K562 (cell line): ENCODE measurements at regions of chr5 and their contacts with region 1.

Region 1: GRCh38 chr5:146173597-146173996 is 8.9 kb downstream of the LARS1 start:
- DNase-seq: no peak
- ATAC-seq: no peak
- H3K4me3 ChIP-seq: no peak overlapping the region
- H3K27ac ChIP-seq: no peak overlapping the region
- H3K4me1 ChIP-seq: no peaks in the 10 kb centered on the region
- H3K27me3 ChIP-seq: no peaks in the 10 kb centered on the region
- CTCF ChIP-seq: no peak
- EP300 ChIP-seq: no peak
- POLR2A ChIP-seq: no peak
- RAD21 ChIP-seq: no peak

Region 2: DNA sequence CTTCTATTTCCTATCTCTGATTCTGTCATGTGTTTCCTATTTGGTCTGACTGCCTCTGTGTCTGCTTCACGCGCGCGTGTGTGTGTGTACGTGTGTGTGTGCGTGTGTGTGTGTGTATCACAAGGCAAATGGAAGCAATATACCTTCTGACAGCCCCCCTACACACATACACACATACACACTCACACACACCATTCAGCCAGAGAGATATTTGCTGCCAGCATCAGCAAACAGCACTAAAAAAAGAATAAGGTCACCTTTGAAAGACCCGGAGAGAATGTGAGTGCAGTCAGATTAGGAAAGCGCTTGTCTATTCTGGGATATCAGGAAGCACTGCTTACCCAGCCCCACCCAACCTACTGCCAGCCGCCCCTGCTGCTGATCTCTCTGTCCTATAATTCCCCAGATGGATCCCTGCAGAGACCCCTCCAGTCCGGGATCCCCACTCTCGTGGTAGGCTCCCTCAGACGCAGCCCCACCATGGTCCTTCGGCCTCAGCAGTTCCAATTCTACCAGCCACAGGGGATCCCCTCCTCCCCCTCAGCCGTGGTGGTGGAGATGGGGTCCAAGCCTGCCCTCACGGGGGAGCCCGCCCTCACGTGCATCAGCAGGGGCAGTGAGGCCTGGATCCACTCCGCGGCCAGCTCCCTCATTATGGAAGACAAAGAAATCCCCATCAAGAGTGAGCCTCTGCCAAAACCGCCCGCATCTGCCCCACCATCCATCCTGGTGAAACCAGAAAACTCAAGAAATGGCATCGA is 114.0 kb before region 1 on chr5:
- CTCF ChIA-PET with region 1: no interaction called
- POLR2A ChIA-PET with region 1: no interaction called
- in situ Hi-C with region 1: no loop called
- intact Hi-C with region 1: no loop called
- DNase-seq: peak in 3 of 4 experiments; percentile 18 to 37 (median 23)
- ATAC-seq: peak; percentile 19; the same call in 2 of the 3 replicates
- H3K4me3 ChIP-seq: no peak overlapping the region
- H3K27ac ChIP-seq: no peak overlapping the region
- H3K4me1 ChIP-seq: peaks cover 3 to 4% of the 10 kb centered on the region in 2 experiments; a peak in 3 of 5 replicates
- H3K27me3 ChIP-seq: peaks cover 20 to 21% of the 10 kb centered on the region in 2 experiments
- CTCF ChIP-seq: no peak
- EP300 ChIP-seq: no peak
- POLR2A ChIP-seq: no peak
- RAD21 ChIP-seq: no peak

Region 3: DNA sequence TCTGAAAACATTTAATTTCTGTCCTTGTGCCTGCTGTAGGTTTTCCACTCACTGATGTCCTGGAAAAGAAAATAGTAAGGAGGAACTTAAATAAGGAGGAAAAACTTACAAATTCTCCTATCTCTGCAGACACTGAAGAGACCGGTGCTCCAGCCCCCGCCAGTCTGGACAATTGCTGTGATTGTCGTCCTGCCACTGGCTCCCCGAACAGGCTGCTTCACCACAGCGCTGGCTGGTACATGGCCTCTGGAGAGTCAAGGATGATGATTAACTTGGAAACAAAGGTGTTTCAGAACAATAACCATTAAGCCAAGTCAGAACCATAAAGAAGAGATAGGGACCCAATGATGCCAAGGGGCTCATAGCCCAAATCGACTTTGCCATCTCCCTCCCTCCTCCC is 75.5 kb before region 1 on chr5:
- CTCF ChIA-PET with region 1: no interaction called
- POLR2A ChIA-PET with region 1: no interaction called
- in situ Hi-C with region 1: no loop called
- intact Hi-C with region 1: no loop called
- DNase-seq: no peak
- ATAC-seq: no peak
- H3K4me3 ChIP-seq: no peak overlapping the region
- H3K27ac ChIP-seq: no peak overlapping the region
- H3K4me1 ChIP-seq: no peaks in the 10 kb centered on the region
- H3K27me3 ChIP-seq: peaks cover 0 to 2% of the 10 kb centered on the region in 2 experiments; a peak in 1 of 5 replicates
- CTCF ChIP-seq: no peak
- EP300 ChIP-seq: no peak
- POLR2A ChIP-seq: no peak
- RAD21 ChIP-seq: no peak

Region 4: GRCh38 chr5:146196459-146197048 is 23.0 kb after region 1 on chr5:
- CTCF ChIA-PET with region 1: no interaction called
- POLR2A ChIA-PET with region 1: no interaction called
- in situ Hi-C with region 1: no loop called
- intact Hi-C with region 1: no loop called
- DNase-seq: no peak
- ATAC-seq: no peak
- H3K4me3 ChIP-seq: no peak overlapping the region
- H3K27ac ChIP-seq: no peak overlapping the region
- H3K4me1 ChIP-seq: peaks cover under 1 to 10% of the 10 kb centered on the region in 2 experiments; a peak in 3 of 5 replicates
- H3K27me3 ChIP-seq: no peaks in the 10 kb centered on the region
- CTCF ChIP-seq: no peak
- EP300 ChIP-seq: no peak
- POLR2A ChIP-seq: no peak
- RAD21 ChIP-seq: no peak

Region 5: DNA sequence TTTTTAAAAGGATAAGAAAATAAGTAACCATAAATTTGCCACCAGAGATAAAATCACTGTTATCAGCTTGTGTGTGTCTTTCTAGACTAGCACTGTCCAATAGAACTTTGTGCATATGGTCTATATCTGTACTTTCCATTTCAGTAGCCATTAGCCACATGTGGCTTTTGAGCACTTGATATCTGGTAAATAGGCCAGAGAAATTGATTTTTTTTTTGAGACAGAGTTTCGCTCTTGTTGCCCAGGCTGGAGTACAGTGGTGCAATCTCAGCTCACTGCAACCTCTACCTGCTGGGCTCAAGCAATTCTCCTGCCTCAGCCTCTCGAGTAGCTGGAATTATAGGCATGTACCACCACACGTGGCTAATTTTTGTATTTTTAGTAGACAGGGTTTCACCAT is 47.6 kb after region 1 on chr5:
- CTCF ChIA-PET with region 1: no interaction called
- POLR2A ChIA-PET with region 1: no interaction called
- in situ Hi-C with region 1: no loop called
- intact Hi-C with region 1: loop called (anchors 10 kb)
- DNase-seq: no peak
- ATAC-seq: no peak
- H3K4me3 ChIP-seq: no peak overlapping the region
- H3K27ac ChIP-seq: no peak overlapping the region
- H3K4me1 ChIP-seq: peaks cover 8% of the 10 kb centered on the region in 2 experiments; a peak in 3 of 5 replicates
- H3K27me3 ChIP-seq: no peaks in the 10 kb centered on the region
- CTCF ChIP-seq: no peak
- EP300 ChIP-seq: no peak
- POLR2A ChIP-seq: no peak
- RAD21 ChIP-seq: no peak